Activated CD4-positive, alpha-beta T cell treated with anti-CD3 and anti-CD28 coated beads for 36 hours (primary cell): ENCODE measurements at regions of chr9 and their contacts with region 1.

Region 1: GRCh38 chr9:71270554-71270953 is 149.1 kb upstream of the TRPM3 start:
- DNase-seq: no peak
- ATAC-seq: no peak
- H3K4me3 Mint-ChIP-seq: no peak overlapping the region
- H3K27ac Mint-ChIP-seq: no peak overlapping the region
- H3K4me1 Mint-ChIP-seq: no peaks in the 10 kb centered on the region
- H3K27me3 Mint-ChIP-seq: peaks cover 11% of the 10 kb centered on the region

Region 2: DNA sequence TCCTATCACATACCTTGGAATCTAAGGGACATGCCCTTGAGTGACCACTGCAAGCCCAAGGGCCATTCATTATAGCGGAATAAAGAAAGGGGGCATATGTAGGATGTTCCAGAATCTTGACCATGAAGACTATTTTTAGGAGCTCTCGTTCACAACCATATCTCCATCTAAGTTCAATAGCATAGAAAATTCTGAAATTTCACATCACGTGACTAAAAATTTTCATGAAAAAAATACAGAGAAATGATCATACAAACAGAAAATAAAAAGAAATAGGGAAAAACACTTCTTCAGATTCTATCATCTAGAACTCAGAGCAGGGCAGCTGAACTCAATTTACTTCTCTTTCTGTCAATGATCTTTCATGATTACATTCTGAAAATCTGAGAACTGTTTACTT is 155.8 kb before region 1 on chr9:
- CTCF ChIA-PET with region 1: no interaction called
- POLR2A ChIA-PET with region 1: interaction called, 10 read pairs
- intact Hi-C with region 1: no loop called
- DNase-seq: no peak
- ATAC-seq: no peak
- H3K4me3 Mint-ChIP-seq: no peak overlapping the region
- H3K27ac Mint-ChIP-seq: no peak overlapping the region
- H3K4me1 Mint-ChIP-seq: no peaks in the 10 kb centered on the region
- H3K27me3 Mint-ChIP-seq: peaks cover 5% of the 10 kb centered on the region

Region 3: DNA sequence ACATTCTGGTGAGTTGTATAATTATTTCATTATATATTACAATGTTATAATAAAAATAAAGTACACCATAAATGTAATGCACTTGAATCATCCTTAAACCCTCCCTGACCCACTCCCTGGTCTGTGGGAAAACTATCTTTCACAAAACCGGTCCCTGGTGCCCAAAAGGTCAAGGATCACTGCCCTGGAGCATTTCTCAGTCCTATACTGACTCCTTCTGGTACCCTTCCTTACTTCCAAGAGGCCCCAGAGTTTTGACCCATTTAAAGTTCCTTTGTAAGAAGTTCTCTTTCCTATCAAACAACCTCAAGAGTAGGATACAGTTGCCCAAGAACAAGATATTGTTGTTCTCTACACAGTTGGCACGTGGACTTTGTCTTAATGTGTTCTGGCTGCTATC is 60.2 kb before region 1 on chr9:
- CTCF ChIA-PET with region 1: no interaction called
- POLR2A ChIA-PET with region 1: no interaction called
- intact Hi-C with region 1: no loop called
- DNase-seq: no peak
- ATAC-seq: no peak
- H3K4me3 Mint-ChIP-seq: no peak overlapping the region
- H3K27ac Mint-ChIP-seq: no peak overlapping the region
- H3K4me1 Mint-ChIP-seq: no peaks in the 10 kb centered on the region
- H3K27me3 Mint-ChIP-seq: peaks cover 4% of the 10 kb centered on the region